Common myeloid progenitor, CD34-positive (primary cell): ENCODE measurements at regions of chr11 and their contacts with region 1.

Region 1: GRCh38 chr11:47593934-47594855 is at the start of gene C1QTNF4:
- DNase-seq: peak in 1 of 3 donors; percentile 49
- H3K4me3 ChIP-seq: peak within 1 kb of the TSS; percentile 53 to 88 (median 74)
- H3K27ac ChIP-seq: peak within 1 kb of the TSS in 1 of 2 experiments; percentile 43
- H3K4me1 ChIP-seq: peaks cover 8 to 54% (median 54%) of the 10 kb centered on the region in 4 experiments
- H3K27me3 ChIP-seq: no peaks in the 10 kb centered on the region

Region 2: GRCh38 chr11:47578524-47579460 is 15.4 kb before region 1 on chr11 and contains the starts of genes KBTBD4 and NDUFS3:
- CTCF ChIA-PET with region 1: interaction called, 12 read pairs
- POLR2A ChIA-PET with region 1: interaction called, 3 read pairs
- DNase-seq: peak; percentile 90 to 95 (median 94)
- H3K4me3 ChIP-seq: peak within 1 kb of the TSS; percentile 85 to 99 (median 96)
- H3K27ac ChIP-seq: peak within 1 kb of the TSS; percentile 72 to 92
- H3K4me1 ChIP-seq: peaks cover 6 to 28% (median 21%) of the 10 kb centered on the region in 4 experiments
- H3K27me3 ChIP-seq: no peaks in the 10 kb centered on the region

Region 3: DNA sequence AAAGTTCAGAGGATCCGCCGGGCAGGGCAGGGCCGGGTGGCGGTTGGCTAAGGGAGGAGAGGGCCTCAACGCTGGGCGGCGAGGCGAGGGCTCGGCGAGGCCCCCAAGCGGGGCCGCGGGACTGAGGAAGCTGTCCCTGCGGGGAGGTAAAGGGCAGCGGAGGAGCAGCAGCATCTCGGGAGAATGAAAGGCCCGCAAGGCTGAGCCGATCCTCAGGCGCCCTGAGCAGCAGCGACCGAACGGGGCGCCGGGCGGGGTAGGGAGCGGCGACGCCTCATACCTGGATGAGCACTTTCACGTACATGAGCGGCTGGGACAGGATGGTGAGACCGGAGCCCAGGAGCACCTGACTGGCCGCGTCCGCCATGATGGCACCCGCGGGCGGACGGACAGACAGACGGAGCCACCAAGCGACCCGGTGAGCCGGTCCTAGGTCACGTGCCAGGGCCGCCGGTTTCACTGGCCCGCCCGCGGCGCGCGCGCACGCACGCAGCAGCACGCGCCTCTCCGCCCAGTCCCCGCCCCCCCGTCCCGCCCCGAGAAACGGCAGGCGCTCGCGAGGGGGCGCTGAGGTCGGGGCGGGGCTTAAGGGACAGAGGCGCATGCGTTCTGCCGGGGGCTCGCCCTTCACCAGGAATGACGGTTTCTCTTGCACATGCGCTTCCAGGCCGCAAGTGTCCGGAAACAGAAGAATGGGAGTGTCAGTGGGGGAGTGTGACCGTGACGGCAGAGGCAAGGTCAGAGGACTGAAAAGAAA is 48.1 kb after region 1 on chr11 and contains the start of gene MTCH2:
- CTCF ChIA-PET with region 1: no interaction called
- POLR2A ChIA-PET with region 1: no interaction called
- DNase-seq: peak; percentile 96
- H3K4me3 ChIP-seq: peak within 1 kb of the TSS; percentile 85 to 96 (median 86)
- H3K27ac ChIP-seq: peak within 1 kb of the TSS; percentile 86 to 95
- H3K4me1 ChIP-seq: peaks cover 8 to 20% (median 14%) of the 10 kb centered on the region in 4 experiments
- H3K27me3 ChIP-seq: no peaks in the 10 kb centered on the region

Region 4: DNA sequence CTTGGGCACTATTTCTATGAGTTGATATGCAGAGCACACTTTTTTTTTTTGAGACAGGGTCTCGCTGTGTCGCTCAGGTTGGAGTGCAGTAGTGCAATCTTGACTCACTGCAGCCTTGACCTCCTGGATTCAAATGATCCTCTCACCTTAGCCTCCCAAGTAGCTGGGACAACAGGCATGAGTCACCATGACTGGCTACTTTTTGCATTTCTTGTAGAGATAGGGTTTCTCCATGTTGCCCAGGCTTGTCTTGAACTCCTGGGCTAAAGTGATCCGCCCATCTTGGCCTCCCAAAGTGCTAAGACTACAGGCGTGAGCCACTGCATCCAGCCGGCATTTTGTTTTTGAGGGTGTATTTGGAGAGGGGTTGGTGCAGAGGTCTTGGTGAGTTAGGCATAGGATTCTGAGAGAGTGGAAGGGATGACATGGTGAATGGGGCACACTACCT is 78.1 kb after region 1 on chr11:
- CTCF ChIA-PET with region 1: no interaction called
- POLR2A ChIA-PET with region 1: no interaction called
- DNase-seq: no peak
- H3K4me3 ChIP-seq: no peak overlapping the region
- H3K27ac ChIP-seq: no peak overlapping the region
- H3K4me1 ChIP-seq: peaks cover 0 to 2% (median 0%) of the 10 kb centered on the region in 4 experiments
- H3K27me3 ChIP-seq: no peaks in the 10 kb centered on the region